ENCODE measurements at regions of chr20 and their contacts with region 1.

Region 1: GRCh38 chr20:50929299-50930138 is 1.7 kb downstream of the ADNP start:
- DNase-seq: peak; percentile 86
- ATAC-seq: peak; percentile 68
- H3K4me3 Mint-ChIP-seq: peak overlapping the region; percentile 95
- H3K27ac Mint-ChIP-seq: peak overlapping the region; percentile 97
- H3K4me1 Mint-ChIP-seq: peaks cover 49% of the 10 kb centered on the region
- H3K27me3 Mint-ChIP-seq: no peaks in the 10 kb centered on the region

Region 2: GRCh38 chr20:50819349-50819748 is 110.2 kb before region 1 on chr20:
- POLR2A ChIA-PET with region 1: interaction called, 39 read pairs
- DNase-seq: no peak
- ATAC-seq: no peak
- H3K4me3 Mint-ChIP-seq: no peak overlapping the region
- H3K27ac Mint-ChIP-seq: peak overlapping the region; percentile 99
- H3K4me1 Mint-ChIP-seq: peaks cover 60% of the 10 kb centered on the region
- H3K27me3 Mint-ChIP-seq: no peaks in the 10 kb centered on the region

Region 3: GRCh38 chr20:50958615-50959542 is 29.4 kb after region 1 on chr20 and contains the start of gene MOCS3:
- POLR2A ChIA-PET with region 1: interaction called, 106 read pairs
- DNase-seq: peak; percentile 74
- ATAC-seq: peak; percentile 67
- H3K4me3 Mint-ChIP-seq: peak within 1 kb of the TSS; percentile 94
- H3K27ac Mint-ChIP-seq: peak within 1 kb of the TSS; percentile 93
- H3K4me1 Mint-ChIP-seq: peaks cover 38% of the 10 kb centered on the region
- H3K27me3 Mint-ChIP-seq: no peaks in the 10 kb centered on the region
- total RNA-seq, gene MOCS3: 5.3 to 5.8 TPM